ENCODE measurements at regions of chr2 and their contacts with region 1.

Region 1: GRCh38 chr2:102070058-102070642 is 72.4 kb upstream of the IL1R1 start:
- DNase-seq: peak; percentile 88 to 97
- ATAC-seq: peak; percentile 78 to 87
- H3K4me3 ChIP-seq: peak overlapping the region; percentile 46 to 55 (median 52)
- H3K27ac ChIP-seq: peak overlapping the region; percentile 87 to 95 (median 92)
- H3K4me1 ChIP-seq: peaks cover 44 to 49% of the 10 kb centered on the region in 2 donors
- H3K27me3 ChIP-seq: no peaks in the 10 kb centered on the region
- CTCF ChIP-seq: peak in 2 of 5 experiments; percentile 13 to 28
- POLR2A ChIP-seq: peak in 1 of 2 donors; percentile 44

Region 2: DNA sequence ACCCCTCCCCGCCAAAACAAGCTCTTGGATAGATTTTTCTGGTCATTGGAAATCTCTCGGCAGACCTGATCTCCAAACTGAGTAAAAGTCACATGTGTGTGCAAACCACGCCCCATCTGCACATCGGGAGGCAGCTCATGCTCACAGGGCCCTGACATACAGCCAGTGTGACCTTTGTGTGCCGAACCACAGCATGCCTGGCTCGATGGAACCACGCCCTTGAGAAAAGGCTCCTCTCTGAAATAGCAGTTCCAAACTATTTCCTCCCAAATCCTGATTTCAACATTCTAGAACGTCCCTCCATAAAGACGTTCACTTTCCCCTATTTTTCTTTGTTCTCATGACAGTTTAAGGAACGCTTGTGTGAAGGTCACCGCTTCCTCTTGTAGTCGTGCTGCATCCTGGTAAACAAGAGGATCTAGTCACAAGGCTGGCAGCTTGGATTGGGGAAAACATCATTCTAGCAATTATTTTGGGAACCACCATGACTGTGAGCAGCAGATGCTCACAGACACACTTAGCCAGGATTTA is 431.9 kb before region 1 on chr2:
- in situ Hi-C with region 1: no loop called
- intact Hi-C with region 1: no loop called
- DNase-seq: no peak
- ATAC-seq: no peak
- H3K4me3 ChIP-seq: no peak overlapping the region
- H3K27ac ChIP-seq: no peak overlapping the region
- H3K4me1 ChIP-seq: no peaks in the 10 kb centered on the region
- H3K27me3 ChIP-seq: no peaks in the 10 kb centered on the region
- CTCF ChIP-seq: no peak
- POLR2A ChIP-seq: no peak

Region 3: DNA sequence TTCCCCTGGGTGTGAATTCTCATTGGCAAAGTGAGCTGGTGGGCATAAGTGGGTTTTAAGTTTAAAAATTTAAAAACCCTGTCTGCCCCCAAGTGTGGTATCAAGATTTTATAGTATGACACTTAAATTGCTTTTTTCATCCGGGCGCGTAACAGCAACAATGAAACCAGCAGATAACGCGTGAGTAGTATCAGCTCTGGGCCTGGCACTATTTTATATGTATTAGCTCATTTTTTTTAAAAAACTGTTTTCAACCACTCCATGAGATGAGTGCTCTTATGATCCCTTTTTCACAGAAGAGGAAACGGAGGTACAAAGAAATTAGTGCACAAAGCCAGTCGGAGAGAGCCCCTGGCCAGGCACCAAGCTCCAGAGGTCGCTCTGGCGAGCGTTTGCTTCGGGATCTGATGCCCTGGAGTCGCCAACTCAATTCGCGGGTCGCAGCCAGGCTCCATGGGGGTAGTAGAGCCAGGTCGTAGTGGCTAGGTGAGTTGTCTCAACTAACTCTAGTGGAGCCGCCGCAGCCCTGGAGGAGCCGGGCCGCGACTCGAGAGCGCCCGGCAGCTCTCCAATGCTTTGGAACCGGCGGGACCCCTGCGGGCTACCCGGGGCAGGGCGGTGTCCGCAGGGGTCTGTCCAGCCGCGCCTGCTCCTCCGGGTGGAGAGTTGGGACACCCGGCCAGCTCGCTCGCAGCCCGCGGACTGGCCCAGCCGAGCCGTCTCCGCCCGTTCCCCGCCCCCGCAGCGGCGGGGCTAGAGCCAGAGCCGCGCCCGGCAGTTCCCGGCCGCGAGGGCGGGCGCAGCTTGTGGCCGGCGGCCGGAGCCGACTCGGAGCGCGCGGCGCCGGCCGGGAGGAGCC is 72.0 kb after region 1 on chr2 and contains the start of gene IL1R1:
- in situ Hi-C with region 1: no loop called
- intact Hi-C with region 1: loop called (anchors 2 kb)
- DNase-seq: peak; percentile 52 to 75
- ATAC-seq: peak; percentile 86
- H3K4me3 ChIP-seq: peak within 1 kb of the TSS; percentile 66 to 85 (median 72)
- H3K27ac ChIP-seq: peak within 1 kb of the TSS; percentile 84 to 97 (median 90)
- H3K4me1 ChIP-seq: peaks cover 10 to 13% of the 10 kb centered on the region in 2 donors
- H3K27me3 ChIP-seq: no peaks in the 10 kb centered on the region
- CTCF ChIP-seq: no peak
- POLR2A ChIP-seq: peak; percentile 77 to 83
- total RNA-seq, gene IL1R1: 17.6 to 23.3 (median 19.3) TPM

Region 4: GRCh38 chr2:102166189-102166845 is 96.2 kb after region 1 on chr2:
- in situ Hi-C with region 1: no loop called
- intact Hi-C with region 1: loop called (anchors 2 kb)
- DNase-seq: peak in 1 of 2 donors; percentile 49
- ATAC-seq: peak; percentile 94 to 95
- H3K4me3 ChIP-seq: no peak overlapping the region
- H3K27ac ChIP-seq: peak overlapping the region; percentile 4 to 47 (median 22)
- H3K4me1 ChIP-seq: peaks cover 9 to 15% of the 10 kb centered on the region in 2 donors
- H3K27me3 ChIP-seq: no peaks in the 10 kb centered on the region
- CTCF ChIP-seq: peak; percentile 67 to 73 (median 72)
- POLR2A ChIP-seq: no peak

Measured in gastrocnemius medialis (tissue), 4 donors.